ENCODE measurements at regions of chr6 and their contacts with region 1.

Region 1: DNA sequence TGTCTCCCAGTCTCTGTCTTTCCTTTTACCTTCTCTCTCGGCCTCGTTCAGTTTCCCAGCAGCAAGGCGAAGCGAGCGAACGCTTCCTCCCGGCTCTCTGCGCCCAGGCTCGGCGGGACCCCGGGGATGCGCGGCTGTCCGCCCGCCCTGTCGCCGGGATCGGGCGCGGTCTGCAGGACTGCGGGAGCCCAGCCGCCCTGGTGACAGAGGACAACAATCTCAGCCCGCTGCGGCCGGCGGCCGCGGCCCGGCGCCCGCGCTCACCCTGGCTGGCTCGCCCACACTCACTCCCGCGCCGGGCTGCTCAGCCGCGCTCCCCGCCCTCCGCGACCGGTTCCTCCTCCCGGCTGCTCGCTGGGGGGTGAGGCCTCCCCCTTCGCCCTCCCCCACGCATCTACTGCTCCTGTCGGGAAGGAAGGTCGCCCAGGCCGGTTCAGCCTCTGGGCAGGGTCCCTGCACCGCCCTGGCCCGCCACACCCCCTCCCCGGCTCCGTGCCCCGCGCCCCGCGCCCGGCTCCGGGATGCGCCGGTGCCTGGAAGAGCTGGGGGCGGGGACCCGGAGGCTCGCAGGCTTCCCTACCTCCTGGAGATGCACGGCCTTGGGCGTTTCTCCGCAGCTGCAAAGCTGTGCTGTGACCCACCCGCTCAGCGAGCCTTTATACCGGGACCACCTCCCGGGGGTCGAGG is 410 bp downstream of the SYNE1 start:
- DNase-seq: peak; percentile 57 to 66
- H3K4me3 ChIP-seq: peak overlapping the region; percentile 56 to 77 (median 66)
- H3K27ac ChIP-seq: peak overlapping the region; percentile 34 to 80 (median 63)
- H3K4me1 ChIP-seq: peaks cover 8 to 35% (median 28%) of the 10 kb centered on the region in 4 donors
- H3K27me3 ChIP-seq: peaks cover 0 to 9% (median 8%) of the 10 kb centered on the region in 3 donors
- CTCF ChIP-seq: no peak
- EP300 ChIP-seq: no peak
- POLR2A ChIP-seq: no peak

Region 2: GRCh38 chr6:151014404-151015100 is 1622.2 kb before region 1 on chr6:
- intact Hi-C with region 1: no loop called
- DNase-seq: peak; percentile 76 to 93
- H3K4me3 ChIP-seq: peak overlapping the region in 1 of 4 donors; percentile 6
- H3K27ac ChIP-seq: peak overlapping the region in 1 of 5 donors; percentile 52
- H3K4me1 ChIP-seq: peaks cover 0 to 13% (median 6%) of the 10 kb centered on the region in 4 donors
- H3K27me3 ChIP-seq: no peaks in the 10 kb centered on the region
- CTCF ChIP-seq: peak in 6 of 7 experiments; percentile 66 to 99 (median 98)
- EP300 ChIP-seq: no peak
- POLR2A ChIP-seq: no peak

Region 3: DNA sequence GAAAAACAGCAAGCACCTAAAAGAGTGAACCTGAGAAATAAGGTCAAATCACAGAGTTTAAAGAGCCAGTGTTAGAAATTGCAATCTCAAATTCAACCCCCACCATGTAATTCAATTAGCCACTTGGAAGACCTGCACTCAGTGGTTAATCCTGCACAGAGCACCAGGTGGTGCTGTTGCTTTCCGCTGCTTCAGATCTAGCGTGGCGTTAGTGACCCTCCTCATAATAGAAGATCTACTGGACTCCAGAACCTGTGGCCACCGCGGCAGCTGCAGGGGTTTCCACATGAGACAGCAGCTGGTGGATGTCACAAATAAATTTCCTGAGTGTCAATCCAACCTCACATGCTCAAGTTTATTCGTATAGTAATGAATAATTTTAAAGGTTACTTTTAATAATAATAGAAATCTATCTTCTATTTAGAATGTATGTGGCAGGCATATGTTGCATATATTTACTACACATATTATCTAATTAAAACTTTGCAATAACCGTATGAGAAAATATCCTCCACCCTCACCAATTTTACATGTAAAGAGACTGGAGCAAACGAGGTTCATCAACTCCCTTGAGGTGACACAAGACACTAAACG is 84.0 kb before region 1 on chr6:
- intact Hi-C with region 1: loop called (anchors 5 kb)
- DNase-seq: peak; percentile 71 to 82
- H3K4me3 ChIP-seq: no peak overlapping the region
- H3K27ac ChIP-seq: no peak overlapping the region
- H3K4me1 ChIP-seq: no peaks in the 10 kb centered on the region
- H3K27me3 ChIP-seq: no peaks in the 10 kb centered on the region
- CTCF ChIP-seq: peak in 5 of 7 experiments; percentile 66 to 88 (median 84)
- EP300 ChIP-seq: no peak
- POLR2A ChIP-seq: no peak

Region 4: GRCh38 chr6:152771061-152771687 is 134.4 kb after region 1 on chr6:
- intact Hi-C with region 1: no loop called
- DNase-seq: no peak
- H3K4me3 ChIP-seq: no peak overlapping the region
- H3K27ac ChIP-seq: no peak overlapping the region
- H3K4me1 ChIP-seq: no peaks in the 10 kb centered on the region
- H3K27me3 ChIP-seq: no peaks in the 10 kb centered on the region
- CTCF ChIP-seq: no peak
- EP300 ChIP-seq: no peak
- POLR2A ChIP-seq: no peak

Measured in stomach (tissue), 19 donors.